ENCODE measurements at regions of chr4 and their contacts with region 1.

Region 1: GRCh38 chr4:142194905-142195304 is 558.5 kb downstream of the IL15 start:
- DNase-seq: no peak
- ATAC-seq: no peak
- H3K4me3 ChIP-seq: no peak overlapping the region
- H3K4me3 Mint-ChIP-seq: no peak overlapping the region
- H3K27ac ChIP-seq: no peak overlapping the region
- H3K27ac Mint-ChIP-seq: peak overlapping the region in 3 of 9 donors; percentile 4 to 26 (median 18)
- H3K4me1 ChIP-seq: no peaks in the 10 kb centered on the region
- H3K4me1 Mint-ChIP-seq: peaks cover 0 to 19% (median 2%) of the 10 kb centered on the region in 7 donors
- H3K27me3 ChIP-seq: no peaks in the 10 kb centered on the region
- H3K27me3 Mint-ChIP-seq: no peaks in the 10 kb centered on the region

Region 2: GRCh38 chr4:142181021-142181420 is 13.9 kb before region 1 on chr4:
- CTCF ChIA-PET with region 1: no interaction called
- POLR2A ChIA-PET with region 1: no interaction called
- intact Hi-C with region 1: loop called in 1 of 2 experiments (anchors 2 kb)
- DNase-seq: no peak
- ATAC-seq: no peak
- H3K4me3 ChIP-seq: no peak overlapping the region
- H3K4me3 Mint-ChIP-seq: no peak overlapping the region
- H3K27ac ChIP-seq: no peak overlapping the region
- H3K27ac Mint-ChIP-seq: no peak overlapping the region
- H3K4me1 ChIP-seq: no peaks in the 10 kb centered on the region
- H3K4me1 Mint-ChIP-seq: peaks cover 4 to 23% (median 6%) of the 10 kb centered on the region in 7 donors
- H3K27me3 ChIP-seq: no peaks in the 10 kb centered on the region
- H3K27me3 Mint-ChIP-seq: no peaks in the 10 kb centered on the region